WTC11 (cell line): ENCODE measurements at regions of chr2 and their contacts with region 1.

Region 1: GRCh38 chr2:200795044-200795443 is 16.7 kb upstream of the BZW1 start:
- DNase-seq: peak; percentile 40
- ATAC-seq: peak; percentile 74
- H3K4me3 Mint-ChIP-seq: no peak overlapping the region
- H3K27ac Mint-ChIP-seq: no peak overlapping the region
- H3K4me1 Mint-ChIP-seq: peaks cover 13% of the 10 kb centered on the region
- H3K27me3 Mint-ChIP-seq: no peaks in the 10 kb centered on the region
- CTCF ChIP-seq: no peak

Region 2: DNA sequence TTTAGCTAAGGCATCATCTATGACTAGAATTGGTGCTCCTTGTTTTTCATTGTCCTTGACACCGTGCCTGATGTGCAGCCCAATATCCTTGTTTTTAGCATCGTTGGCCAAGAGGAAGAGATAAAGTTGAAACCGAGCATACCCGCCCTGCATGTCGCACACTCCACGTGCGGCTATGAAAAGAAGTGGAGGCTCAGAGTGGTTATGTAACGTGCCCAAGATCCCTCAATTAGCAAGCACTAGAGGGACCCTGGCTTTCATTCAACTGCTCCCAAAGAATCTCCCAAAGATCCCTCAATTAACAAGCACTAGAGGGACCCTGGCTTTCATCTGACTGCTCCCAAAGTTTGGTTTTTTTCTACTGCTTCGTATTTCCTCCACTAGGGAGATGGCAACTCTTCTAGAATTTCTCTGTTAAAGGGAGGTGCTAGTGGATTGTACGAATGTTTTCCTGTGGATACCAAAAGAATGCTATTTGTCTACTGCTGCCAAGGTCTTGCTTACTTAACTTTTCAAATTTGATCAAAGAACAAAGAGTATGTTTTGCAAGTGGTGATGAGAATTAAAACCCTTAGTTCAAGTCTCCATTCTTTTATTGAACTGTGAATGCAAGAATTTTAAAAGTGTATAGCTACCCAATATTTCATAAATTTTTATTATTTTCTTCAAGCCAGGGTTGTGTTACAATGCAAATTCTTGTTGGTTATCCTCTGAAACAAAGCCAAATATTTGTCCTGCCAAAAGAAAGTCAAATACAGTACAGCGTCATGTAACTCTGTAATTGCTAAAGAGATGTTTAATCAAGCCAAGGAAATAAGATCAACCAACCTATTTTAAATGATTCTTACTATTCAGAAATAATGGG is 117.1 kb before region 1 on chr2:
- CTCF ChIA-PET with region 1: no interaction called
- POLR2A ChIA-PET with region 1: no interaction called
- DNase-seq: no peak
- ATAC-seq: peak; percentile 72
- H3K4me3 Mint-ChIP-seq: no peak overlapping the region
- H3K27ac Mint-ChIP-seq: no peak overlapping the region
- H3K4me1 Mint-ChIP-seq: no peaks in the 10 kb centered on the region
- H3K27me3 Mint-ChIP-seq: no peaks in the 10 kb centered on the region
- CTCF ChIP-seq: no peak

Region 3: DNA sequence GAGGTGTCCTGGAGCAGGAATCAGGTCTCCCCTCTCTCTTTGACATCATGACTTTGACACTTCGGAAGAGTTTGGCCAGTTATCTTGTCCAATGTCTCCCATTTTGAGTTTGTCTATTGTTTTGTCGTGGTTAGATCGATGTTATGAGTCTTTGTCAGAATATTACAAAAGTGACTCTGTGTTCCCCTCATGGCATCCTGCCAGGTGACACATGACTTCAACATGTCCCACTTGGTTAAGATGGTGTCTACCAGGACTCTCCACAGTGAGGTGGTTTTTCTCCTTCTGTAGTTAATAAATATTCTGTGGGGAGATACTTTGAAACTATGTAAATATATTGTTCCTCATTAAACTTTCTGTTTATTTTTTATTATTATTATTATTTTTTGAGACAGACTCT is 60.0 kb before region 1 on chr2:
- CTCF ChIA-PET with region 1: interaction called, 14 read pairs
- POLR2A ChIA-PET with region 1: no interaction called
- DNase-seq: no peak
- ATAC-seq: no peak
- H3K4me3 Mint-ChIP-seq: no peak overlapping the region
- H3K27ac Mint-ChIP-seq: no peak overlapping the region
- H3K4me1 Mint-ChIP-seq: peaks cover 39% of the 10 kb centered on the region
- H3K27me3 Mint-ChIP-seq: no peaks in the 10 kb centered on the region
- CTCF ChIP-seq: no peak